Activated T-helper 2 cell treated with anti-CD3 and anti-CD28 coated beads, Interferon-gamma antibody, Interleukin-2, Interleukin-4, amounts not matched to agents 10 μg/mL and 5 μg/mL and 100 μg/mL, durations not matched to agents 14 hours and 24 hours and 36 hours (primary cell): ENCODE measurements at regions of chr17 and their contacts with region 1.

Region 1: GRCh38 chr17:18225121-18225566 is 291 bp upstream of the LLGL1 start:
- DNase-seq: peak; percentile 93
- H3K4me3 Mint-ChIP-seq: peak overlapping the region; percentile 70
- H3K27ac Mint-ChIP-seq: no peak overlapping the region
- H3K4me1 Mint-ChIP-seq: peaks cover 17% of the 10 kb centered on the region
- H3K27me3 Mint-ChIP-seq: no peaks in the 10 kb centered on the region

Region 2: DNA sequence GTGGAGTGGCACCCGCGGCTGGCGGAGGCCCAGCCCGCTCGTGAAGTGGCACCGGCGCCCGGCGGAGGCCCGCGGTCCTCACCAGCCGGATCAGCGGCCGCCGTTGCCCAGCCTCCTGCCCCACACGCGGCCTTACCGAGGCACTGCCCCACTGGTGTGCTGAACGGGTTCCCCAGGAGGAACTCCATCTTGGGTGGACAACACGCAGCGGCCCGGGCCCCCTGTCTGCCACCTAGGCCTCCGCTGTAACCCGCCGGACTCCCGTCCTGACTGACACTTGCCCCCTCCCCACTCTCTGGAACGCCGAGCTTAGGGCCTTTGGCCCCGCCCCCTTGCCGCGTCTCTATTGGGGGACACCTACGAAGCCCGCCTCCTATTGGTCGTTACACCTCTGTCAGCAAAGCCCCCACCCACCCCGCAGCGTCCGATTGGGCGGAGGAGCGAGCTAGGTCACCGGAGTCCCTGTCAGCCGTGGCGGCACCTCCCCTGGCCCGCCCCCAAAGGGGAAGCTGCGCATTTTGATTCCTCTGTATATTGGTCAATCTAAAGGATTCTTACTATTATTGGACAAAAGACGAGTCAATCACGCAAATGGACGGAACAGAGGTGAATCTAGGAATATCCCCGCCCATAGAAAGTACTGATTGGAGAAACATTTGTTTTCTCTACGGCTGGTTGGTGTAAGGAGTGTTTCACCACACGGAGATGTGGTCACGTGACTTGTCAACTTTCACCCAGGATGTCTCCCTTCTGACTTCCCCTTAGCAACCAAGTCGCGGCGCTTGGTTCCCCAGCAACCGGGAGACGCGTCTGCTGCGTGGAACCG is 252.8 kb before region 1 on chr17 and contains the starts of genes DRC3 and TOM1L2:
- intact Hi-C with region 1: no loop called
- DNase-seq: peak; percentile 100
- H3K4me3 Mint-ChIP-seq: peak within 1 kb of the TSS; percentile 91
- H3K27ac Mint-ChIP-seq: peak within 1 kb of the TSS; percentile 80
- H3K4me1 Mint-ChIP-seq: peaks cover 27% of the 10 kb centered on the region
- H3K27me3 Mint-ChIP-seq: no peaks in the 10 kb centered on the region
- total RNA-seq, gene DRC3: not detected in 2 replicates
- total RNA-seq, gene TOM1L2: 9.4 and 13.4 TPM in 2 replicates

Region 3: DNA sequence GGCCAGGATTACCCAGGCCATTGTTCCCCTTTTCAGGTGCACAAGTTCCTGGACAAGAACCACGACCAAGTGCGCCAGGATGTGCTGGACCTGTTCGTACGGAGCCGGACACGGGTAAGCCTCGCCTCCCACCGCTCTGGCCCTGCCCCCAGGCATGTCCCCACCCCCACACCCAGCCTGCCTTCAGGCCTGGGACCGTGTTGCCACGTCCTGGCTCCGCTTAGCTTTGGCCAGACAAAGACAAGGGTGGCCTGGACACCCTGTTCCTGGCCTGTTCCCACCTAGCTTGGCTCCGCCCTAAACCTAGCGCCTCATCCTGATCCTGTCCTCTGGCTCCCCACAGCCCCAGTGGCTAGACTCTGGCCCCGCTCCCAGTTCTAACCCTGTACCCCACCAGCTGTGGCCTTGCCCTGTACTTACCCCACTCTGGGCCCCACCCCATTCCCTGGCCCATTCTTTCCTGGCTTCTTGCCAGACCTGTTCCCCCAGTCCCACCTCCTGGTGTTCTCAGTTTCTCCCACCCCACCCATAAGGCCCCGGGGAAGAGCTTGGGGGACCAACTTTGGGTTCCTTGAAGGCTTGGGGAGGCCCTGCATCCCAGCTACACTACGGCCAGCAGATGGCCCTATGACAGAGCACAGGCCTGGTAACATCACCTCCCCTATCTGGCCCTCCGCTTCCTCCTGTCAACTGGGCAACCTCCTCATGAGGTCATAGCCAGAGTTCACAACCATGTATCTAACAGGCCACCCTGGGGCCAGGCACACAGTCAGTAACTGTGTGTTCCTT is 85.5 kb before region 1 on chr17:
- intact Hi-C with region 1: no loop called
- DNase-seq: no peak
- H3K4me3 Mint-ChIP-seq: no peak overlapping the region
- H3K27ac Mint-ChIP-seq: no peak overlapping the region
- H3K4me1 Mint-ChIP-seq: peaks cover 3% of the 10 kb centered on the region
- H3K27me3 Mint-ChIP-seq: no peaks in the 10 kb centered on the region

Region 4: DNA sequence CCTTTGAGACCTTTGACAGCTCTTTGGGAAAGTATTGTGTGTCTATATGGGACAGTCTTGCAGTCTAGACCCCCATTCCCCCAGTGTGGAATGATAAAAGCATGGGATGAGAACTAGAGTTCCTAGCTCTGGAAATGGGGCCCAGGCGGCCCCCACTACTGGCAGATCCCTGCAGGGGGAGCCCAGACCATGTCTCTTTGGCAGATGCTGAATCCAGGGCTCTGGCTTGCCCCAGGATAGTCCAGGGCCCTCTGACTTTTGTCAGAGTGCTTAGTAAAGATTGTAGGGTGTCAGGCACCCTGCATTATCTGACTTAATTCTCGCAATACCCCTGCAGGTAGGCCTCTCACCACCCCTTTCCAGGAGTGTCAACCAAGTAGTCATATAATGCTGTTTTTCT is 33.2 kb before region 1 on chr17:
- intact Hi-C with region 1: no loop called
- DNase-seq: no peak
- H3K4me3 Mint-ChIP-seq: no peak overlapping the region
- H3K27ac Mint-ChIP-seq: no peak overlapping the region
- H3K4me1 Mint-ChIP-seq: peaks cover 42% of the 10 kb centered on the region
- H3K27me3 Mint-ChIP-seq: no peaks in the 10 kb centered on the region

Region 5: GRCh38 chr17:18260332-18261144 is 35.4 kb after region 1 on chr17 and contains the start of gene MIEF2:
- intact Hi-C with region 1: loop called (anchors 1 kb)
- DNase-seq: peak; percentile 89
- H3K4me3 Mint-ChIP-seq: peak within 1 kb of the TSS; percentile 82
- H3K27ac Mint-ChIP-seq: peak within 1 kb of the TSS; percentile 82
- H3K4me1 Mint-ChIP-seq: peaks cover 25% of the 10 kb centered on the region
- H3K27me3 Mint-ChIP-seq: no peaks in the 10 kb centered on the region
- total RNA-seq, gene MIEF2: 6.8 and 7.9 TPM in 2 replicates

Region 6: DNA sequence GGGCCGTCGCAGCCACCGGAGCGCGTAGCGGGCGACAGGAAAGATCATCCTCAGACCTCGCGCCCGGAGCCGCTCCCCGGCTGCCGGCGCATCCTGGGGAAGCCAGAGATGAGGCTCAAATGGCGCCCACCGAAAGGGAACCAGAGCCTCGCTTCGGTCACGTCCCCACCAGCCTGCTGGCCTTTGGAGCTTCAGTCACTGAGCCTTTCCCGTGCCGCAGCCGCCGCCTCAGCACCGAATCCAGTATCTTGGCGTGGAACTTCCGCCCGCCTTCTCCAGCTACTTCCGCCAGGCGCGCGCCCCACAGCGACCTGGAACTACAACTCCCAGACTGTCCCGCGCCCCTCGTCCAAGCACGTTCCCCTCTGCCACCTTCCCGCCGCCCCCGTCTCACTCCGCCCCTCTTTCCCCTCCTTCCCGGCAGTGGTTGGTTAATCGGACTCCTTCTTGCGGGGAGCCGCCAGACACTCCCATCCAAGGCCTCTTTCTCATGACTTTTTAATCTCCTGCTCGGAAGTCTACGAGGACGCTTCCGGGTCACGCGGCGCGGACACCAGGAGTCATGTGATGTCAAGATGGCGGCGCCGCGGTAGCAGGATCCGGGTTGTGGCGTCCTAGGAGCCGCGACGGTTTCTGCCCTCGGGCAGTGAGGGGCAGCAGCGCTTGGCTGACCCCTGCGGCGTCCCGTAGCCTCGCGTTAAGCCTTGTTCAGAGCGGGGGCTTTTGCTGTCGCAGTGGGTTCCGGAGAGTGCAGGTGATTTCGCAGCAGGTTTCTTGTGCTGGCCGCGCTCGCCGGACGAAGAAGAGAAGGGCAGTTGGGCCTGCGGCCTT is 89.8 kb after region 1 on chr17 and contains the starts of genes SMCR8 and TOP3A:
- intact Hi-C with region 1: loop called (anchors 10 kb)
- DNase-seq: peak; percentile 98
- H3K4me3 Mint-ChIP-seq: peak within 1 kb of the TSS; percentile 94
- H3K27ac Mint-ChIP-seq: peak within 1 kb of the TSS; percentile 100
- H3K4me1 Mint-ChIP-seq: peaks cover 61% of the 10 kb centered on the region
- H3K27me3 Mint-ChIP-seq: no peaks in the 10 kb centered on the region
- total RNA-seq, gene SMCR8: 16.5 and 16.8 TPM in 2 replicates
- total RNA-seq, gene TOP3A: 70.7 and 75.0 TPM in 2 replicates